ENCODE measurements at regions of chr7 and their contacts with region 1.

Region 1: DNA sequence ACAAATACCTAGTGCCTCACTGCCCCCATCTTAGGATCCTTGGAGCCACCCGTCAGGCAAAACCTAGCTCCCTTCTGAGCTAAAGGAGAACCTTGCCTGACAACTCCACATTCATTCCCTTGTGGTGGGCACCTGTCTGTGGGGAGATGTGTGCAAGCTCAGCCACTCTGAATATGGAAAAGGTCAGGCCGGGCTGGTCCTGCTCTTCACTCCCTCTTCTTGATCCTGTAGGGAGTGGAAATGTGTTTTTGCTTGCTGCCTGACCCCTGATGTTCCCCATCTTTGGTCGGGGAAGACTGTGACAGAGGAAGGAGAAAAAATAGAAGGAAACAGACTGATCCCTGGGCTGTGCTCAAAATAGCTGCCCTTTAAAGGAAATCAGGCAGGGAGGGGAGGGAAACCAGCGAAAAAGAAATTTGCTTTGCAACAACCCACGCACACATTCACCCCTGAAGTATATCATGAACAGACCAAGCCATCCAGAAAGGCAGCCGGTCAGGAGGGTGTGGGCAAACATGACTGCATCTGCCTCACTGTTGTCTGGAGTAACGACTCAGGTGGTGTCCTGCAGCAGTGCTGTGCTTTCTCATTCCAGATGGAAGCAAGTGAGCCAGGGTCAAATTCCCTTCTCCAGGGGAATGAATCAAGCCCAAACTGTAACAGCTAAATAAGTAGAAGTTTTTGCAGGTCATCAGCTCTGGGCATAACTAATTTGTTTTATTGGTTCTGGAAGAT is 74.0 kb downstream of the SCRN1 start:
- DNase-seq: no peak
- ATAC-seq: no peak
- H3K4me3 ChIP-seq: no peak overlapping the region
- H3K27ac ChIP-seq: no peak overlapping the region
- H3K4me1 ChIP-seq: no peaks in the 10 kb centered on the region
- H3K27me3 ChIP-seq: no peaks in the 10 kb centered on the region
- CTCF ChIP-seq: no peak
- POLR2A ChIP-seq: no peak

Region 2: GRCh38 chr7:29639881-29640595 is 275.6 kb before region 1 on chr7:
- intact Hi-C with region 1: loop called in 1 of 2 experiments (anchors 10 kb)
- DNase-seq: no peak
- ATAC-seq: no peak
- H3K4me3 ChIP-seq: no peak overlapping the region
- H3K27ac ChIP-seq: no peak overlapping the region
- H3K4me1 ChIP-seq: no peaks in the 10 kb centered on the region
- H3K27me3 ChIP-seq: no peaks in the 10 kb centered on the region
- CTCF ChIP-seq: no peak
- POLR2A ChIP-seq: no peak

Region 3: DNA sequence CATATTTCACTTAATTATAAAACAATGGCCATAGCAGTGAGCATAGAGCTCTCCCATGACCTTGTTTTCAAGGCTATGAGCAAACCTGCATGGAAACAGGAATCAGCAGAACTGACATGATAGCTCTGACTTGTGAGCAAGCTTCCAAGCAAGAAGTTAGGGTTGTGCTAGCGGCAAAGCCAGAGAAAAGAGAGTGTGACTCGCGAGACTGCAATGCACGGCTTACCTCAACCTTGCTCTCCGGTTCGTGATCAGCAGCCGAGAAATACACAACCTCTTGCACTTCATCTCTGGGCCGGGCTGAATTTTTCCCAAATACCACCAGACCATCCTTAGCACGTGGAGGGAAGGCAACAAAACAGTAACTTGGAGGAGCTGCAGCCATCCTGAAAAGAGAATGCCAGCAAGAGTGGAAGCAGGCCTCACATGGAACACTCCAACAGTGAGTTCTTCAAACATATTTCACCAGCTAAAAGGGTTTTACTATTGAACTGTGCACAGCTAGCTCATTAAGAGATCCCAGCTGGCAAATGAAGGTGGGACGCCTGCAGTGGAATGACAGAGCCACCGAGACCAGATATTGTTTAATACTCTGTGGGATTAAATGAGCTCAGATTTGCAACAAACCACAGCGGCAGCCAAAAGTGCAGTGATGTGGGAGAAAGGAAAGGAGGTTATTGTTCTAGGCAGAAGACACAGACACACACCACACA is 53.2 kb after region 1 on chr7:
- intact Hi-C with region 1: no loop called
- DNase-seq: no peak
- ATAC-seq: no peak
- H3K4me3 ChIP-seq: no peak overlapping the region
- H3K27ac ChIP-seq: no peak overlapping the region
- H3K4me1 ChIP-seq: peaks cover 0 to 4% (median 0%) of the 10 kb centered on the region in 4 donors
- H3K27me3 ChIP-seq: no peaks in the 10 kb centered on the region
- CTCF ChIP-seq: no peak
- POLR2A ChIP-seq: no peak

Region 4: GRCh38 chr7:30164567-30164966 is 248.9 kb after region 1 on chr7:
- intact Hi-C with region 1: no loop called
- DNase-seq: no peak
- ATAC-seq: peak; percentile 80 to 83 (median 81)
- H3K4me3 ChIP-seq: no peak overlapping the region
- H3K27ac ChIP-seq: no peak overlapping the region
- H3K4me1 ChIP-seq: peaks cover 0 to 16% (median 7%) of the 10 kb centered on the region in 4 donors
- H3K27me3 ChIP-seq: no peaks in the 10 kb centered on the region
- CTCF ChIP-seq: peak; percentile 58 to 67 (median 60)
- POLR2A ChIP-seq: no peak

Measured in right lobe of liver (tissue), 6 donors.